ENCODE measurements at regions of chr22 and their contacts with region 1.

Region 1: DNA sequence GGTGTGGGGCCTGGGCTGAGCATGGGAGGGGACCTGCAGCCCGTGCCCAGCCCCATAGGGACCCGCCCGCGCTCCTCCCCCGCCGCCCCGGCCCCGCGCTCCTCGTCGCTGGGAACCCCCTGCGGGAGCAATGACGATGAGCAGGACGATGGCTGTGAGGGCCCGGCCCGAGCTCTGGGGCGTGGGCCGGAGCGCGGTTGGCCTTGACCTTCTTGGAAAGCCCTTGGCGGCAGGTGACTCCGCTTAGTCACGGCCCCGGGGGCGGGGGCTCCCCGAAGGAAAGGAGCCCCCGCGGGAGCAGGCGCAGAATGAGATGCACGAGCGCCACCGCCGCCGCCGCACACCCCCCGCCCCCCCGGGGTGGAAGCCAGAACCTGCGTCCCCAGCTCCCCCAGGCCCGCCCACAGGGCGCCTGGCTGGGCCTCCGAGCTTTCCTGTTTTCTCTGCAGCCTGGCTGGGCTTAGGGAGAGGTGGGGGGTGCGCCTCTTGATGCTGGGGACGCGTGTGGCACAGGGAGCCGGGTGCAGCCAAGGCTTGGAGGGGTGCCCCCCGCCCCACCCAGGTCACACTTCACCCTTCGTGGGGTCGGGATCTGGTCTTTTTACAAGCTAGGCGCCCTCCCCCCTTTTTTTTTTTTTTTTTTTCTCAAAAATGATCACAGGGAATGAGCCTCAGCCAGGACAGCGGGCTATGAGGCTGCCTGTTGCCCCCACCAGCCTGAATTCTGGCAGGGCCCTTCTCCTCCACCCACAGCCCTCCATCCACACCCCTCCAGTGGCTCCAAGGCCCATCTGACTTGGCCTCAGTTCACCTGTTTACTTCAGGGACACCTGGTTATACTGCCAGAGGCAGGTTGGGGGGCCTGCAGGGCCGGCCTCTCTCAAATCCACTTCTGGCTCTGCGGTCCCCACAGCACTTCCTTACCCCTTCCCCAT is 17.9 kb downstream of the CRELD2 start:
- DNase-seq: peak; percentile 94
- ATAC-seq: peak; percentile 82
- H3K4me3 Mint-ChIP-seq: peak overlapping the region; percentile 68
- H3K27ac Mint-ChIP-seq: peak overlapping the region; percentile 86
- H3K4me1 Mint-ChIP-seq: peaks cover 10% of the 10 kb centered on the region
- H3K27me3 Mint-ChIP-seq: no peaks in the 10 kb centered on the region

Region 2: DNA sequence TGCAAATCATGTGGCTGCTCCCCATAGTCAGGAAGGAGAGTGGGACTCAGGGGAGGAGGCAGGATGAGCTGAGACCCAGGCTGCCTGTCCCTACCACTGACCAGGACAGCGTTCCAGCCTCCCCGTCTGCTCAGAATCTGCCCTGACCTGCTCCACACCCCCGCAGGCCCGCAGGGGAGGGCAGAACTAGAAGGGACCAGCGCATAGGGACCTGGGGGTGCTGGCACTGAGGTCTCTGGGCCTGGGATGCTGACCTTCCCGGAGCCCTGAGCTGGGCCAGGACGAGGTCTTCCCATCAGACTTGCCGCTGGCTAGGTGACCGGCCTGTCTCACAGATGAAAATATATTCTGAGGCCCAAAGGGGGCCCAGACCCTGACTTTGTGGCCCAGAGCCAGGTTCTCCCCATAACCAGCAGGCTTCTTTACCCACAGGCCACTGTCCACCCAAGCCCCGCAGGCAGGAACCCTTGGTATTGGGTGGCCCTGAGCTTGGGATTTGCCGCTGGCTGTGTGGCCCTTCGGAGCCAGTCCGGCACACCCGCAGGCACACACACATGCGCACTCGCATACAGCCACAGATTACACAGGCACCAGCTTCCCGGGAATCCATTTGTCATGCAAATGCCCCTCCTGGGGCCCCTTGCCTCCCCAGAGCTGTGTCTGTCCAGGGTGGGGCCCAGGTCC is 10.5 kb after region 1 on chr22:
- POLR2A ChIA-PET with region 1: interaction called, 11 read pairs
- DNase-seq: no peak
- ATAC-seq: no peak
- H3K4me3 Mint-ChIP-seq: no peak overlapping the region
- H3K27ac Mint-ChIP-seq: peak overlapping the region; percentile 82
- H3K4me1 Mint-ChIP-seq: peaks cover 3% of the 10 kb centered on the region
- H3K27me3 Mint-ChIP-seq: no peaks in the 10 kb centered on the region

Region 3: GRCh38 chr22:49960159-49961004 is 24.1 kb after region 1 on chr22 and contains the start of gene PIM3:
- POLR2A ChIA-PET with region 1: interaction called, 50 read pairs
- DNase-seq: peak; percentile 94
- ATAC-seq: peak; percentile 83
- H3K4me3 Mint-ChIP-seq: peak within 1 kb of the TSS; percentile 94
- H3K27ac Mint-ChIP-seq: peak within 1 kb of the TSS; percentile 85
- H3K4me1 Mint-ChIP-seq: peaks cover 13% of the 10 kb centered on the region
- H3K27me3 Mint-ChIP-seq: no peaks in the 10 kb centered on the region
- total RNA-seq, gene PIM3: 44.3 to 48.5 TPM

Region 4: DNA sequence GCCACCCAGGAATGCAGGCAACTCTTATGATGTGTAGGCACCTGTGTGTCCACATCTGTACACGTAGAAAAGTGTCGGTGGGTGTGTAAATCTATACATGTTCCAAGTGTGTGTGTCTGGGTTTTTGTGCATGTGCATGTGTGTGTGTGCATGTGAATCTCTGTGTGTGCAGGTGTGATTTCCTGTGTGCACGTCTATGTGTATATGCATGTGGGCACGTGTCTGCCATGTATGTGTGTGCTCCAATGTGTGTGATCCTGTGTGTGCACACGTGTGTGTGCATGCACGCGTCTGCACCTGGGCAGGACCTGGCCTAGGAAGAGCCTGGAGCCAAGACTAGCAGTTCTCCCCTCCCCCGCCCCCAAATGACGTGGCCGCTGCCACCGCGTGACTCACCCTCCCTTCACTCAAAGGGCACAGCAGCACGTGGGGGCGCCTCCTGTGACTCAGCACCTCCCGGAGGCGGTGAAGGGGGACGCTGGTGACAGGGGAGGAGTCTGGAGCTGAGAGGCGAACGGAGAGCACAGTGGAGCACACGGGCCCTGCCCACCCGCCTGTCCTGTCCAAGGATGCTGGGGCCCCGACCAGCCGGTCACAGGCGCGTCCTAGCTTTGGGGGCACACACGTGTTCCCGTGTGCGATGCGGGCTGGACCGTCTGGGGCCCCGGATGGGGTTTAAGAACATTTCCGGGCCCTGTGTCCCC is 34.4 kb after region 1 on chr22:
- POLR2A ChIA-PET with region 1: interaction called, 21 read pairs
- DNase-seq: peak; percentile 85
- ATAC-seq: peak; percentile 87
- H3K4me3 Mint-ChIP-seq: peak overlapping the region; percentile 85
- H3K27ac Mint-ChIP-seq: peak overlapping the region; percentile 90
- H3K4me1 Mint-ChIP-seq: peaks cover 13% of the 10 kb centered on the region
- H3K27me3 Mint-ChIP-seq: no peaks in the 10 kb centered on the region

Region 5: GRCh38 chr22:49983148-49984042 is 47.1 kb after region 1 on chr22:
- POLR2A ChIA-PET with region 1: no interaction called
- DNase-seq: no peak
- ATAC-seq: peak; percentile 26
- H3K4me3 Mint-ChIP-seq: no peak overlapping the region
- H3K27ac Mint-ChIP-seq: no peak overlapping the region
- H3K4me1 Mint-ChIP-seq: peaks cover 4% of the 10 kb centered on the region
- H3K27me3 Mint-ChIP-seq: peaks cover 22% of the 10 kb centered on the region

Measured in activated naive CD8-positive, alpha-beta T cell treated with anti-CD3 and anti-CD28 coated beads, Interleukin-2, amount 10 ng/mL, durations not matched to agents 7 days and 5 days (primary cell).